ENCODE measurements at regions of chr1 and their contacts with region 1.

Region 1: GRCh38 chr1:109239580-109240095 is 9.7 kb upstream of the CELSR2 start:
- DNase-seq: peak; percentile 61
- H3K4me3 ChIP-seq: no peak overlapping the region
- H3K27ac ChIP-seq: peak overlapping the region; percentile 95
- H3K4me1 ChIP-seq: peaks cover 33% of the 10 kb centered on the region
- H3K27me3 ChIP-seq: no peaks in the 10 kb centered on the region
- CTCF ChIP-seq: peak; percentile 55 to 81

Region 2: GRCh38 chr1:109061183-109061582 is 178.5 kb before region 1 on chr1:
- CTCF ChIA-PET with region 1: no interaction called
- dilution Hi-C with region 1: no loop called
- in situ Hi-C with region 1: no loop called
- intact Hi-C with region 1: no loop called
- DNase-seq: no peak
- H3K4me3 ChIP-seq: no peak overlapping the region
- H3K27ac ChIP-seq: no peak overlapping the region
- H3K4me1 ChIP-seq: no peaks in the 10 kb centered on the region
- H3K27me3 ChIP-seq: no peaks in the 10 kb centered on the region
- CTCF ChIP-seq: no peak

Region 3: DNA sequence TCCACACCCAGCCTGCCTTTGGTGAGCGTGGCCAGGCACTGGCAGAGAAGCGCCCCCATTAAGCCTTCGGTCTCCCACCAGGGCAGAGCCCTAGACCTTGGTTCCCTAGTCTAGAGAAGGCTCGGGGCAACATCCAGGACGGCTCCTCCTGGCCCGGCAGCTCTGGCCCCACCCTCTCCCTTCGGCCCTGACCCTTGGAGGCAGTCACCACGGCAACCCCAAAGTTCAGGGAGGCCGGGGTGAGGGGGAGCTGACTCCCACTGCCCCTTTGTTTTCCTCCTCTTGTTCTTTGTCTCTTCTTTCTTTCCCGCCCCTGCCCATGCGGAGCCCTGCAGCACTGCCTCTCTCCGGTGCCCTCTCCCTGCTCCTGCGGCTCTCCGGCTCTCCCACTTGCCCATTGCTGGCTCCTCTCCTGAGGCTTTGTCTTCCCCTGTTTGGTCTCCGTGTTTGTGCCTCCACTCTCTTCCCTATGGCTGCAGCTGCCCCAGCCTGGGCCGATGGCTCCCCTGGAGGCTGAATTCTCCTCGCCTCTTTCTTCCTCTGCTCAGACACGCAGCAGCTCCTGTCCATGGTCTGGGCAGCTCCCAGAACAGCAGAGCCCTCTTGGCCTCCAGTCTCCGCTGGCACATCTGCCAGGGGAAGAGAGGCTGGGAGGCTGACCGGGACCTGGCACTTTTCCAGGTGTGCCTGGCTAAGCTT is 15.5 kb after region 1 on chr1:
- CTCF ChIA-PET with region 1: interaction called, 10 read pairs
- dilution Hi-C with region 1: no loop called
- in situ Hi-C with region 1: no loop called
- intact Hi-C with region 1: no loop called
- DNase-seq: no peak
- H3K4me3 ChIP-seq: peak overlapping the region in 2 of 3 experiments; percentile 25 to 26
- H3K27ac ChIP-seq: peak overlapping the region; percentile 54
- H3K4me1 ChIP-seq: peaks cover 52% of the 10 kb centered on the region
- H3K27me3 ChIP-seq: no peaks in the 10 kb centered on the region
- CTCF ChIP-seq: peak; percentile 19 to 45

Region 4: GRCh38 chr1:109263597-109264398 is 24.2 kb after region 1 on chr1:
- CTCF ChIA-PET with region 1: no interaction called
- dilution Hi-C with region 1: no loop called
- in situ Hi-C with region 1: no loop called
- intact Hi-C with region 1: loop called (anchors 1 kb)
- DNase-seq: no peak
- H3K4me3 ChIP-seq: no peak overlapping the region
- H3K27ac ChIP-seq: peak overlapping the region; percentile 40
- H3K4me1 ChIP-seq: peaks cover 32% of the 10 kb centered on the region
- H3K27me3 ChIP-seq: no peaks in the 10 kb centered on the region
- CTCF ChIP-seq: peak; percentile 100

Region 5: DNA sequence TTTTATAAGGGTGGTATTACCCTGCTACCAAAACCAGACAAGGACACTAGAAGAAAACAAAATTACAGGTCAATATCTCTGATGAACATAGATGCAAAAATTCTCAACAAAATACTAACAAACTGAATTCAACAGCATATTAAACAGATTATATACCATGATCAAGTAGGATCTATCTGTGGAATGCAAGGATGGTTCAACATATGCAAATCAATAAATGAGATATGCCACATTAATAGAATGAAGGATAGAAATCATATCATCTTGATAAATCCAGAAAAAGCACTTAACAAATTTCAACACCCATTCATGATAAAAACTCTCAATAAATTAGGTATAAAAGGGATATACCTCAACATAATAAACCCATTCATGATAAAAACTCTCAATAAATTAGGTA is 91.5 kb after region 1 on chr1:
- CTCF ChIA-PET with region 1: no interaction called
- dilution Hi-C with region 1: no loop called
- in situ Hi-C with region 1: no loop called
- intact Hi-C with region 1: no loop called
- DNase-seq: no peak
- H3K4me3 ChIP-seq: no peak overlapping the region
- H3K27ac ChIP-seq: no peak overlapping the region
- H3K4me1 ChIP-seq: no peaks in the 10 kb centered on the region
- H3K27me3 ChIP-seq: no peaks in the 10 kb centered on the region
- CTCF ChIP-seq: no peak

Region 6: GRCh38 chr1:109397538-109398342 is 158.1 kb after region 1 on chr1 and contains the start of gene SORT1:
- CTCF ChIA-PET with region 1: no interaction called
- dilution Hi-C with region 1: no loop called
- in situ Hi-C with region 1: no loop called
- intact Hi-C with region 1: loop called (anchors 1 kb)
- DNase-seq: peak; percentile 77
- H3K4me3 ChIP-seq: peak within 1 kb of the TSS; percentile 54 to 73 (median 65)
- H3K27ac ChIP-seq: peak within 1 kb of the TSS; percentile 16
- H3K4me1 ChIP-seq: peaks cover 20% of the 10 kb centered on the region
- H3K27me3 ChIP-seq: no peaks in the 10 kb centered on the region
- CTCF ChIP-seq: no peak
- total RNA-seq, gene SORT1: 24.6 to 41.8 TPM

Region 7: GRCh38 chr1:109441069-109441468 is 201.4 kb after region 1 on chr1:
- CTCF ChIA-PET with region 1: no interaction called
- dilution Hi-C with region 1: no loop called
- in situ Hi-C with region 1: no loop called
- intact Hi-C with region 1: no loop called
- DNase-seq: no peak
- H3K4me3 ChIP-seq: no peak overlapping the region
- H3K27ac ChIP-seq: no peak overlapping the region
- H3K4me1 ChIP-seq: no peaks in the 10 kb centered on the region
- H3K27me3 ChIP-seq: peaks cover 4% of the 10 kb centered on the region
- CTCF ChIP-seq: no peak

Region 8: DNA sequence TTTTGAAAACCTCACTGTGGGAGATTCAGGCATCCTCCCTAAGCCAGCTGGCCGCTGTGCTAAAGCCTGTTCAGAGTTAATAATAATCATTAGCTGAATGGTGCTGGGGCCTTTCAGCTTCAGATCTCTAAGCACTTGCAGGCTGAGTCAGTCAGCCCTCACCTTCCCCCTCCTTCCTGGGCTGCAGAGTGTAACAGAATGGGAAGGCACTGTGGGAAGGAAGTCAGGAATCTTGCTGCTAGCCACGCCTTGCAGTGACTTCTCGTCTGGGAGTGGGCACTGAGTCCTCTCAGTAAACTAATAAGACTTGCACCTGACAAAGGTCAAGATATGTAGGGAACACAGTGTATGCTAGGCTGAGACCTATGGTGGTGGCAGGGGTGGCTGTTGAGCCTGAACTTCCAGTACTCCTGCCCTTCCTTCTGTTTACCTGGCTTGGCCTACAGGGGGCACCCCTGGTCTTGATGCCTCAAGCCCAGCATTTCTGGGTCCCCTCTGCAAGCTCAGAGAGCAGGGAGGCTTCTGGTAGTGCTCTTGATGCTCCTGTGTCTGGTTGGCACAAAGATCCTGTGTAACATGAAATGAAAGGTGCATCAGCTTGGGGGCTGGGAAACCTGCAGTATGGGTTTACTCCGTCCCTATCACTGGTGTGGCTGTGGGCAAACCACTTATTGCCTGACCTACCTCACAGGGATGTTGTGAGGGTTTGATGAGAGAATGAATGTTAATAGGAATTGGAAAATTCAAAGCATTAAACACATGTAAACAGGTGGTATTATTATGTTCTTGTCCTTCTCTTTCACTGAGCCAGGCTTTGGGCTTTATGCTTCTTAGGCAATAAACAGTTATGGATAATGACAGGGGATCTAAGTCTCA is 260.3 kb after region 1 on chr1:
- CTCF ChIA-PET with region 1: no interaction called
- dilution Hi-C with region 1: no loop called
- in situ Hi-C with region 1: no loop called
- intact Hi-C with region 1: no loop called
- DNase-seq: peak; percentile 34
- H3K4me3 ChIP-seq: no peak overlapping the region
- H3K27ac ChIP-seq: no peak overlapping the region
- H3K4me1 ChIP-seq: peaks cover 6% of the 10 kb centered on the region
- H3K27me3 ChIP-seq: no peaks in the 10 kb centered on the region
- CTCF ChIP-seq: peak; percentile 50 to 55

Region 9: GRCh38 chr1:110019770-110020169 is 780.1 kb after region 1 on chr1:
- CTCF ChIA-PET with region 1: no interaction called
- dilution Hi-C with region 1: loop called (anchors 10 kb)
- in situ Hi-C with region 1: no loop called
- intact Hi-C with region 1: no loop called
- DNase-seq: no peak
- H3K4me3 ChIP-seq: no peak overlapping the region
- H3K27ac ChIP-seq: no peak overlapping the region
- H3K4me1 ChIP-seq: no peaks in the 10 kb centered on the region
- H3K27me3 ChIP-seq: no peaks in the 10 kb centered on the region
- CTCF ChIP-seq: no peak